Activated CD8-positive, alpha-beta T cell treated with anti-CD3 and anti-CD28 coated beads for 36 hours (primary cell): ENCODE measurements at regions of chr22 and their contacts with region 1.

Region 1: DNA sequence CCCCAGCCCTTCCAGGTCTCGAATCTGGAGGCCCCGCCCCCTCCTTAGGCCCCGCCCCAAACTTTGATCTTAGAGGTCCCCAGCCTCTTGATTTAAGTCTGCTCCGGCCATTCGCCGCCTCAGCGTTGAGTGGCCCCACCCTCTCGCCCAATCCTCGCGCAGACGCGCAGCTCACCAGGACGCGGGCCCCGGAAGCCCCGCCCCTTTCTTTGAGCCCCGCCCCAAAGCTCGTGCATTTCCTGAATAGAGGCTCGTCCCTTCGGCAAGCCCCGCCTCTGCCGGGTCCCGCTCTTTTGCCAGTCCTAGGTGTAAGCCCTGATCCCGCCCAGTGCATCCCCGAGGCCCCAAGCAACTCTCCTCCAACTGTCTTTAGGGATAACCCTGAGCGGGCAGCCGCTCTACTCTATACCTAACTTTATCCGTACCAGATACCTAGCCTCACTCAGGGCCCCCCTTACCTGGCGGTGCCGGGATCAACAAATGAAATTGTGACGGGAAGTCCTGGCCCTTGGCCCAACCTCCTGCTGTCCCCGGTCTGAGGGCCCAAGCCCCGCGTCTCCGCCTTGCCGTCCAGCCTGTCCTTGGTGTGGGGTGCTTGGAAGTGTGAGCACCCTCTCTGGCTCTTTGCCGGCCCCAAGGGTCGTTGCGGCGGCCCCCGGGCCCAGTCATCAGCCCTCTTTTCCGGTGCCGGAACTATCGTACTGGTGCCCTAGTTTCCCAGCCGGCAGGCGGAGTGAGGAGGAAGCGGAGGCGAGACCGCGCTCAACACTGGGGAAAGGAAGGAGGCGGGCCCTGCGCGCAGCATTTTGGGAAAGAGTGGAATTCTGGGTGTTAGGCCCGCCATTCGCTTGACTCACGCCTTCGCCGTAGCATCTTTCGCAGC is at the start of gene SNRPD3:
- DNase-seq: peak; percentile 100
- ATAC-seq: peak; percentile 92
- H3K4me3 Mint-ChIP-seq: peak within 1 kb of the TSS; percentile 98
- H3K27ac Mint-ChIP-seq: peak within 1 kb of the TSS; percentile 99
- H3K4me1 Mint-ChIP-seq: peaks cover 47% of the 10 kb centered on the region
- H3K27me3 Mint-ChIP-seq: no peaks in the 10 kb centered on the region
- CTCF ChIP-seq: no peak
- total RNA-seq, gene SNRPD3: 153 to 165 TPM

Region 2: GRCh38 chr22:24542641-24543040 is 12.8 kb before region 1 on chr22:
- CTCF ChIA-PET with region 1: no interaction called
- POLR2A ChIA-PET with region 1: interaction called, 14 read pairs
- intact Hi-C with region 1: no loop called
- DNase-seq: no peak
- ATAC-seq: no peak
- H3K4me3 Mint-ChIP-seq: no peak overlapping the region
- H3K27ac Mint-ChIP-seq: no peak overlapping the region
- H3K4me1 Mint-ChIP-seq: no peaks in the 10 kb centered on the region
- H3K27me3 Mint-ChIP-seq: no peaks in the 10 kb centered on the region
- CTCF ChIP-seq: no peak